Activated T-helper 2 cell treated with anti-CD3 and anti-CD28 coated beads, Interferon-gamma antibody, Interleukin-2, Interleukin-4, amounts not matched to agents 10 μg/mL and 5 μg/mL and 100 μg/mL, durations not matched to agents 14 hours and 24 hours and 36 hours (primary cell): ENCODE measurements at regions of chr9 and their contacts with region 1.

Region 1: GRCh38 chr9:35489313-35490154 is at the start of gene RUSC2:
- DNase-seq: peak; percentile 53
- H3K4me3 Mint-ChIP-seq: peak within 1 kb of the TSS; percentile 87
- H3K27ac Mint-ChIP-seq: peak within 1 kb of the TSS; percentile 80
- H3K4me1 Mint-ChIP-seq: peaks cover 31% of the 10 kb centered on the region
- H3K27me3 Mint-ChIP-seq: peaks cover 23% of the 10 kb centered on the region
- total RNA-seq, gene RUSC2: 5.9 and 6.7 TPM in 2 replicates

Region 2: DNA sequence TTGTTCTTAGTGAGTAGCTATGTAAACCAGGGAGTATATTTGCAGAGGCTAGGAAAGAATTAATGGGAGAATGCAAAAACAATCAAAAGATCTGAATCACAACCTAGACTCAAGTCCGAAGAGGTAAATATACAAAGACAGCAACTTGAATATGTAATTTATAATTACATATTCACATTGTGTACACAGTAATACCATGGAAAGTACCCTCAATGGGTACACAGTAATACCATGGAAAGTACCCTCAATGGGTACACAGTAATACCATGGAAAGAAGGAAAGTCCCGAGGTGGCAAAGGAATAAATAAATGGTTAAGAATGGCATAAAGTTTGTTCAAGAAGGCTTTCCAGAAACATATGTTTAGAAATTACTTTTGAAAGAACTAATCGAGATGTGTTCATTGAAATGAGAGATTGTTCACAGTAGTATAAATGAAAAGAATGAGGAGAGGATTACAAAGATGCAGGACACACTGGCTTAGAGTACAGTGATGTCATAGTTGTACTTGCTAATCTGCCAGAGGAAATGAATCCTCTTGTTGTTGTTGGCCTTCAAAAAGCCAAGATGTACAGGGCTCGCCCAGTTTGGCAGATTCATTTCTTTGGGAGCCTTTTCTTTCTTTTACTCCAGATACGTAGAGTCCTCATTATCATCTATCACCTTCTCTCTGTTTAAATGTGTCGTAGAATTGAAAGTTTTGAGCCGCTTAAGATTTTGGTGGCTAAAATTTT is 211.7 kb before region 1 on chr9:
- intact Hi-C with region 1: loop called (anchors 10 kb)
- DNase-seq: no peak
- H3K4me3 Mint-ChIP-seq: no peak overlapping the region
- H3K27ac Mint-ChIP-seq: no peak overlapping the region
- H3K4me1 Mint-ChIP-seq: peaks cover 15% of the 10 kb centered on the region
- H3K27me3 Mint-ChIP-seq: peaks cover 15% of the 10 kb centered on the region

Region 3: GRCh38 chr9:35341585-35341984 is 147.9 kb before region 1 on chr9:
- intact Hi-C with region 1: no loop called
- DNase-seq: no peak
- H3K4me3 Mint-ChIP-seq: no peak overlapping the region
- H3K27ac Mint-ChIP-seq: no peak overlapping the region
- H3K4me1 Mint-ChIP-seq: no peaks in the 10 kb centered on the region
- H3K27me3 Mint-ChIP-seq: peaks cover 7% of the 10 kb centered on the region